Activated CD8-positive, alpha-beta T cell treated with anti-CD3 and anti-CD28 coated beads for 36 hours (primary cell): ENCODE measurements at regions of chr4 and their contacts with region 1.

Region 1: DNA sequence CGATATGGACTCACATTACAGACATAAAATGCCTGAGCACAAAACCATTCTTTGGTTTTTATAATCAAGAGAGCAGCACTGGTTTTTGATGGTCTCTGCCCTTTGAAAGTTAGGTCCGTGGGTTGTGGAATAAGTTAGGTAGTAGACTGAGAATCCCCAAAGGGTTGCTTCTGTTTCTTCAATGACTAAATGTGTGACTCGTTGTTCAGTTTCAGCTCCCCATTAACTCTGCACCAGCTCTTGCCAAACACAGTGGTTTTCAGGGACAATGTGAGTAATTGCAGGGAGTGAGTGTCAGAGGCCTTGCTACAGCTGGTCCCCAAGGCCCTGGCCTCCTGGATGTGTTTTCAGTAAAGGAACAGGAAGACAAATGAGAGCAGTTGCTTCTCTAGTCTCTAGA is 24.8 kb downstream of the SMIM20 start:
- DNase-seq: peak; percentile 69
- ATAC-seq: peak; percentile 95
- H3K4me3 Mint-ChIP-seq: peak overlapping the region; percentile 4
- H3K27ac Mint-ChIP-seq: peak overlapping the region; percentile 82
- H3K4me1 Mint-ChIP-seq: peaks cover 19% of the 10 kb centered on the region
- H3K27me3 Mint-ChIP-seq: peaks cover 19% of the 10 kb centered on the region
- CTCF ChIP-seq: no peak

Region 2: GRCh38 chr4:25913851-25914669 is 24.7 kb before region 1 on chr4 and contains the start of gene SMIM20:
- CTCF ChIA-PET with region 1: interaction called, 3 read pairs
- POLR2A ChIA-PET with region 1: no interaction called
- intact Hi-C with region 1: loop called (anchors 2 kb)
- DNase-seq: peak; percentile 92
- ATAC-seq: peak; percentile 95
- H3K4me3 Mint-ChIP-seq: peak within 1 kb of the TSS; percentile 97
- H3K27ac Mint-ChIP-seq: peak within 1 kb of the TSS; percentile 98
- H3K4me1 Mint-ChIP-seq: peaks cover 16% of the 10 kb centered on the region
- H3K27me3 Mint-ChIP-seq: no peaks in the 10 kb centered on the region
- CTCF ChIP-seq: no peak
- total RNA-seq, gene SMIM20: 21.3 to 26.9 TPM

Region 3: DNA sequence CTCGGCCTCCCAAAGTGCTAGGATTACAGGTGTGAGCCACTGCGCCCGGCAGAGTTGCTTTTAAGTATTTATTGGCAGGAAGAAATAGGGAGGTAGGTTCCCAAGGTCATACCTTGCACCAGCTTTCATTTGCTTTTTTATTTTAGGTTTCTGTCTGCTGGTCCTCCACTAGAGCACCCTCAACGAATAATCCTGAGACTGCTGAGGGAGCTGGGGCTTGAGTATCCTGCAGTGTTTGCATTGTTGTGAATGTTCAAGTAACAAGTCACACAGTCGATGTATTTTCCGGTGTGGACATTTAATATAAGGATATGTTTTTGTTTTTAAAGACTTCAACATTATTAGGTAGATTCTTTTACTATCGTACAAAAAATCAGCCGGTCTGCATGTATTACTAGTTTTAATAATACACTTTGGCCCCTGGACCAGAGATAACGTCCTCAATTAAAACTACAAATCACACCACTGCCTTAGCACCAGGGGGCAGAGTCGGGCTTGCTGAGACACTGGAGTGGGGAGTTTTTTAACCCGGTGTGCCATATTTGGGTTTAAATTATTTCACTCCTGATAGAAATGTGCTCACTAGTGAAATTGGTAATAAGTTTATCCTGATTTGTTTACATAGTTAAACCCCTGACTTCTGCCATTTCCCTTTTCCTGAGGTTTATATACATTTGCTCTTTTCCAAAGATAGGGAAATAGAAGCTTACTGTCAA is 13.1 kb before region 1 on chr4:
- CTCF ChIA-PET with region 1: interaction called, 16 read pairs
- POLR2A ChIA-PET with region 1: no interaction called
- intact Hi-C with region 1: no loop called
- DNase-seq: peak; percentile 50
- ATAC-seq: peak; percentile 61
- H3K4me3 Mint-ChIP-seq: no peak overlapping the region
- H3K27ac Mint-ChIP-seq: no peak overlapping the region
- H3K4me1 Mint-ChIP-seq: peaks cover 8% of the 10 kb centered on the region
- H3K27me3 Mint-ChIP-seq: no peaks in the 10 kb centered on the region
- CTCF ChIP-seq: peak; percentile 48